Activated naive CD4-positive, alpha-beta T cell treated with anti-CD3 and anti-CD28 coated beads for 36 hours (primary cell): ENCODE measurements at regions of chr6 and their contacts with region 1.

Region 1: GRCh38 chr6:11381801-11382513 is 149.5 kb upstream of the NEDD9 start:
- DNase-seq: peak; percentile 83
- H3K4me3 Mint-ChIP-seq: peak overlapping the region; percentile 86
- H3K27ac Mint-ChIP-seq: peak overlapping the region; percentile 91
- H3K4me1 Mint-ChIP-seq: peaks cover 57% of the 10 kb centered on the region
- H3K27me3 Mint-ChIP-seq: no peaks in the 10 kb centered on the region

Region 2: GRCh38 chr6:11194356-11195218 is 187.4 kb before region 1 on chr6:
- CTCF ChIA-PET with region 1: no interaction called
- intact Hi-C with region 1: no loop called
- DNase-seq: no peak
- H3K4me3 Mint-ChIP-seq: no peak overlapping the region
- H3K27ac Mint-ChIP-seq: no peak overlapping the region
- H3K4me1 Mint-ChIP-seq: peaks cover 17% of the 10 kb centered on the region
- H3K27me3 Mint-ChIP-seq: no peaks in the 10 kb centered on the region

Region 3: DNA sequence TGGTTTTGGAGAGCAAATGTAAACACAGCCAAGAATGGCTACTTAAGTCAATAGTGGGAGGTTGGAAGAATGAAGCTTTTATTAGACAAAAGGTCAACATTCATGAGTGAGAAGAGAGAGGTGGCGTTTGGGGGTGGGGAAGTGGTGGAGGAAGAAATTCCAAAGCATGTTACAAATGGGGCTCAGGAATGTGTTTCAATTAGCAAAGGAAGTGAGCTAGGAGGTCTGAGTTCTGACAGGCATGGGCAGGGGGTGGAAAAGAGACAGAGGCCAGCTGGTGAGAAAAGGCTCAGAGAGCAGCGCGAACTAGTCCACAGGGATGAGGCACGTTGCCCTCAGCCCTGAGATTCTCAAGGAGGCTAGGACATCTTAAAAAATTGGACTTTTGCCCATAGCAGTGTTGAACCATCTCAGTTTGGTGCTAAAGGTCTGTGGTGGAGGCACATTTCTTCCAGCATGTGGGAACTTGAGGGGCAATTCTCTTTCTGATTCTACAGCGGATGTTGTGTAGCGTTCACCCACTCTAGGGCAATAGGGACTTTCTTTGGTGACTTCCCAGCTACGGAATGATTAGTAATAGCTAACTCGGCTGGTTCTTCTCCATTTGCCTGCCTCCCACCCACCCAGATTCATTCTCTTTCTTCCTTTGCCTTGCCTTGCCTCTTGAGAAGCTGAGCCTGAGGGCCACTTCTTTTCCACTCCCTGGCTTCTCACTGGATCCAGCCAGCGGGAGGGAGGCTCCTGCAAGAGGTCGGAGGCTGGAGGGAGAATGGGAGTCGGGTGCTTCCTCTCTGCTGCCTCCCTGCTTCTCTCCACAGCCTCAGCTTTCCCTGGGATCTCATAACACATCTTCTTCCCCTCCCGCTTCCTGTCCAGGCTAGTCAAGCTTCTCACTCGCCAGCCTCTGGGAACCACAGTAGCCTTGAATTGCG is 104.4 kb before region 1 on chr6:
- CTCF ChIA-PET with region 1: no interaction called
- intact Hi-C with region 1: loop called (anchors 5 kb)
- DNase-seq: peak; percentile 48
- H3K4me3 Mint-ChIP-seq: peak overlapping the region; percentile 3
- H3K27ac Mint-ChIP-seq: peak overlapping the region; percentile 74
- H3K4me1 Mint-ChIP-seq: peaks cover 42% of the 10 kb centered on the region
- H3K27me3 Mint-ChIP-seq: no peaks in the 10 kb centered on the region

Region 4: DNA sequence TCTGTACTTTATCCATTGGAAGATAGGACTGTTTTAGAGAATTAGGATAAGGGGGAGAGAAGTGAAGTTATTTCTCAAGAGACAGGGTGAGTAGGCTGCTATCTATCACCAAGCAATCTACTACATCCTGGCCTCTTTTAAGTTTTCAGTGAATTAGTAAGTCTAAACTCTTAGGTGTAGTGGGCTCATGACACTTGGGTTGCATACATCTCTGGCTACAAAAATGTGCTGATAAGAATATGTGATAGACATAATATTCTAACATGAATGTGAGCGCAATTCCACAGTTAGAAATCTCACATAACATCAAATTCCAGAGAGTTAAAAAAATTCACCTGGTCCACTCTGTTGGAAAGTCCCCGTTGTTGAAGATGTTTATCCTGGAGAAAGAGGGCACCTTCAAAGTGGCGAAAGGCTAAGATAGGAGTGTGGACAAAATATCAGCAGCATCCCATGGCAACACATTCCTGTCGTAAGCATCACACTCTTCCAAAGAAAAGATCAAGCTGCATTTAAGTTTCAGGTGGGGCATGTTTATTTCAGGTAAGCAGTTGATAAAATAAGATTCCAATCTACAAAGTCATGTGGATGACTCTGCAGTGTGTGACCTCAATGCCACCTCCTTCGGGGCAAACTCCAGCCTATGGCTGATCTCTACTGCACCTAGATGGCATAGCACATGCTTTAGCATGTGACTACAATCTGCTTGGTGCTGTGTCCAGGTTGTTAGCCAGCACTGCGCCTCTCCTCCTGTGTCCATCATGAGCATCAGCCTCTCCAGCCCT is 37.8 kb before region 1 on chr6:
- CTCF ChIA-PET with region 1: interaction called, 4 read pairs
- intact Hi-C with region 1: loop called (anchors 1 kb)
- DNase-seq: no peak
- H3K4me3 Mint-ChIP-seq: no peak overlapping the region
- H3K27ac Mint-ChIP-seq: peak overlapping the region; percentile 81
- H3K4me1 Mint-ChIP-seq: peaks cover 86% of the 10 kb centered on the region
- H3K27me3 Mint-ChIP-seq: no peaks in the 10 kb centered on the region

Region 5: GRCh38 chr6:11353921-11354389 is 28.0 kb before region 1 on chr6:
- CTCF ChIA-PET with region 1: interaction called, 4 read pairs
- intact Hi-C with region 1: loop called (anchors 1 kb)
- DNase-seq: peak; percentile 93
- H3K4me3 Mint-ChIP-seq: peak overlapping the region; percentile 54
- H3K27ac Mint-ChIP-seq: peak overlapping the region; percentile 96
- H3K4me1 Mint-ChIP-seq: peaks cover 82% of the 10 kb centered on the region
- H3K27me3 Mint-ChIP-seq: no peaks in the 10 kb centered on the region

Region 6: GRCh38 chr6:11414176-11414963 is 32.4 kb after region 1 on chr6:
- CTCF ChIA-PET with region 1: interaction called, 3 read pairs
- intact Hi-C with region 1: loop called (anchors 1 kb)
- DNase-seq: peak; percentile 60
- H3K4me3 Mint-ChIP-seq: no peak overlapping the region
- H3K27ac Mint-ChIP-seq: no peak overlapping the region
- H3K4me1 Mint-ChIP-seq: peaks cover 33% of the 10 kb centered on the region
- H3K27me3 Mint-ChIP-seq: no peaks in the 10 kb centered on the region

Region 7: DNA sequence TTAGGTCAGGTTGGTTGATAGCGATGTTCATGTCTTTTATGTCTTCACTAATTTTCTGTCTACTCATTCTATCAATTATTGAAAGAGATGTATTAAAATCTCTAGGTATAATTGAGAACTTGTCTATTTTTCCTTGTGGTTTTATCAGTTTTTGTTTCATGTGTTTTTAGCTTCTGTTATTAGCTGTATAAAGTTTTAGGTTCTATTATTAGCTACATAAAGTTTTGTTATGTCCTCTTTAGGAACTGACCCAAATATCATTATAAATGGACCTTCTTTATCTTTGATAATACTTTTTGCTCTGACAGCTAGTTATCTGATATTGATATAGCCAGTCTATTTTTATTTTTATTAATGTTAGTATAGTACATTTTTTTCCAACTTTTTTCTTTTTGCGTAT is 63.2 kb after region 1 on chr6:
- CTCF ChIA-PET with region 1: no interaction called
- intact Hi-C with region 1: loop called (anchors 1 kb)
- DNase-seq: no peak
- H3K4me3 Mint-ChIP-seq: no peak overlapping the region
- H3K27ac Mint-ChIP-seq: no peak overlapping the region
- H3K4me1 Mint-ChIP-seq: peaks cover 53% of the 10 kb centered on the region
- H3K27me3 Mint-ChIP-seq: no peaks in the 10 kb centered on the region

Region 8: DNA sequence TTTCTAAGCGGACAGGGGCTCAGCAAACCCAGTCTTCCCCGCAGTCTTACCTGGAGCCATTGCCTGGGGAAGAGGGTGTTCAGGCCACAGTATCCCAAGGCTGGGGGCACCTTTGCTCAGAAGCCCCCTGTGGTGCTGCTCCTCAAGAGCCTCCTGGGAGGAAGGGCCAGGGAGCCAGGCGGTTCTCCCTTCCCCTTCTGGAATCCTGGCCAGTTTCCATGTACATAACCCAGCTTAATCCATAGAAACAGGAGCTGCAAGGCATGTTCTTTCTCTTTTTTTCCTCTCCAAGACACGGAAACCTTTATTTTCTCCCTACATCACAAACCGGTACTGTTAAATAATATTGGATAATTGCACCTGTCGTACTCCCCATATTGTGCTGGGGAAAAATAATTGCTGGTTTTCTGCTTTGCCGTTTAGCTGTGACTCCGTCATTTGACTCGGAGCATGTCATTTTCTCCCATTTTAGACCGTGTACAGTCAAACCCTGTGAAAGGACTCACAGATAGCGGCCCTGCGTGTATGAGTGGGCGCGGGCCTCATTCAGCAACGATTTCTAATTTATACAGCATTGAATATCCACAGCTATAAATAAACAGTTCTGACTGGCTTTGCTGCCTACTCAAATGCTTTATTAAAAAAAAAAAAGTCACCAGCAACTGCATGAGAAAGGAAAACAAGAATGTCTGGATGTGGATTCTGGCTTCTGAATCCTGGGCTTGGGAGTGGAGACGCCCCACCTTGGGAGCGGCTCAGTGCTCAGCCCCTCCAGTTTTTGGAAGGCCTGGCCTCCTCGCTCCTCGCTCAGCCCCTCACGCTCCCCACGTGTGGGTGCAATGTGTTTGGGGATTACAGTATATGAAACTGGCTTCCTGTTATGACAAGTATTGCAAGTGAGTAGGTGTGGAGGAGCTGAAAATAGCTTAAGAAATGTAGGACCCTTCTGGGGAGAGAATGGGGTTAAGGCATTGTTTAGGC is 329.3 kb after region 1 on chr6:
- CTCF ChIA-PET with region 1: no interaction called
- intact Hi-C with region 1: no loop called
- DNase-seq: peak; percentile 79
- H3K4me3 Mint-ChIP-seq: peak overlapping the region; percentile 57
- H3K27ac Mint-ChIP-seq: peak overlapping the region; percentile 97
- H3K4me1 Mint-ChIP-seq: peaks cover 79% of the 10 kb centered on the region
- H3K27me3 Mint-ChIP-seq: no peaks in the 10 kb centered on the region

Region 9: GRCh38 chr6:11964729-11965335 is 582.9 kb after region 1 on chr6:
- CTCF ChIA-PET with region 1: no interaction called
- intact Hi-C with region 1: no loop called
- DNase-seq: no peak
- H3K4me3 Mint-ChIP-seq: no peak overlapping the region
- H3K27ac Mint-ChIP-seq: no peak overlapping the region
- H3K4me1 Mint-ChIP-seq: peaks cover 3% of the 10 kb centered on the region
- H3K27me3 Mint-ChIP-seq: no peaks in the 10 kb centered on the region